ENCODE measurements at regions of chr10 and their contacts with region 1.

Region 1: GRCh38 chr10:98467506-98468346 is 21.0 kb upstream of the HPS1 start:
- DNase-seq: peak; percentile 70 to 91 (median 82)
- ATAC-seq: peak; percentile 100
- H3K4me3 ChIP-seq: peak overlapping the region; percentile 36 to 54
- H3K27ac ChIP-seq: no peak overlapping the region
- H3K4me1 ChIP-seq: peaks cover 4 to 13% of the 10 kb centered on the region in 2 donors
- H3K27me3 ChIP-seq: peaks cover 0 to 23% of the 10 kb centered on the region in 2 donors
- CTCF ChIP-seq: peak; percentile 74 to 89

Region 2: GRCh38 chr10:99248824-99249223 is 781.1 kb after region 1 on chr10:
- intact Hi-C with region 1: loop called in 1 of 2 experiments (anchors 10 kb)
- DNase-seq: no peak
- ATAC-seq: no peak
- H3K4me3 ChIP-seq: no peak overlapping the region
- H3K27ac ChIP-seq: no peak overlapping the region
- H3K4me1 ChIP-seq: no peaks in the 10 kb centered on the region
- H3K27me3 ChIP-seq: no peaks in the 10 kb centered on the region
- CTCF ChIP-seq: no peak